MCF 10A (cell line): ENCODE measurements at regions of chr9 and their contacts with region 1.

Region 1: DNA sequence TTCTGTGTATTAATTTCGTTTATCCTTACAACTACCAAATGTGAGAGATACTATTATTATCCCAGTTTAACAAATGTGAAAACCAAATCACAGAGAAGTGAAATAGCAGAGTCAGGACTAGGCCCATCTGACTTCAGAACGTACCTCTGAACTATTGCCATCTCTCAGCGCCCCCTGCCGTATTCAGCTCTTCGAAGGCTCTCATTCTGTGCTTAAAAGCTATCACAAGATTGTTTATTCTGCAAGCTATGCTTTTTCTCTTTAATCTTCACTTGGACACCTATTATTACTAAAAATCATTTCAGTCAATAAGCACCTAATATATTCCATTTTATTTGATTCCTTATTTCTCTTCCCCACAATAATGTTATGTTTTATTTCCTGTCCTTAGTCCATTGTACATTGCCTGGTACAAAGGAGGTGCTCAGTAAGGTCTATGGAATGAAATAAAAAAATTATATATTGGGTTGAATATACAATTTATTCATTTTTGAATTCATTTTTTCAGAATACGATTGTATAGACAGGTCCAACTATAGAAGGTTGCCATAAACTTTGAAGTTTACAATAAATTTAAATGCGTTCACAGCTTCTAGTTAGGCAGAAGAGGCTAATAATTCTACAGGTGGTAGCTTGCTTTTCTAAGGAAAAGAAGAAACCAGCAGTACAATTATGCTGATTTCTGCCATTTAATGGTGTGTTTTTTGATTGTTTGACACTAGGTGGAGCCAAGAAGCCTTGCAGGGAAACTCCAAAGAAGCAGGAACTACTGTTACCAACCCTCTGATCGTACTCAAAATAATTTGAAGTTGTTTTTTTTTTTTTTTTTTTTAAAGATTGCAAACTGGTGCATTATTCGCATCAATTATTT is 202.2 kb upstream of the DMRTA1 start:
- DNase-seq: peak; percentile 55
- H3K4me3 Mint-ChIP-seq: no peak overlapping the region
- H3K27ac Mint-ChIP-seq: no peak overlapping the region
- H3K4me1 Mint-ChIP-seq: peaks cover 23% of the 10 kb centered on the region
- H3K27me3 Mint-ChIP-seq: no peaks in the 10 kb centered on the region
- CTCF ChIP-seq: peak; percentile 30

Region 2: GRCh38 chr9:21326526-21327139 is 917.7 kb before region 1 on chr9:
- CTCF ChIA-PET with region 1: interaction called, 10 read pairs
- POLR2A ChIA-PET with region 1: interaction called, 4 read pairs
- intact Hi-C with region 1: loop called (anchors 5 kb)
- DNase-seq: peak; percentile 30
- H3K4me3 Mint-ChIP-seq: no peak overlapping the region
- H3K27ac Mint-ChIP-seq: no peak overlapping the region
- H3K4me1 Mint-ChIP-seq: peaks cover 6% of the 10 kb centered on the region
- H3K27me3 Mint-ChIP-seq: no peaks in the 10 kb centered on the region
- CTCF ChIP-seq: peak; percentile 32

Region 3: DNA sequence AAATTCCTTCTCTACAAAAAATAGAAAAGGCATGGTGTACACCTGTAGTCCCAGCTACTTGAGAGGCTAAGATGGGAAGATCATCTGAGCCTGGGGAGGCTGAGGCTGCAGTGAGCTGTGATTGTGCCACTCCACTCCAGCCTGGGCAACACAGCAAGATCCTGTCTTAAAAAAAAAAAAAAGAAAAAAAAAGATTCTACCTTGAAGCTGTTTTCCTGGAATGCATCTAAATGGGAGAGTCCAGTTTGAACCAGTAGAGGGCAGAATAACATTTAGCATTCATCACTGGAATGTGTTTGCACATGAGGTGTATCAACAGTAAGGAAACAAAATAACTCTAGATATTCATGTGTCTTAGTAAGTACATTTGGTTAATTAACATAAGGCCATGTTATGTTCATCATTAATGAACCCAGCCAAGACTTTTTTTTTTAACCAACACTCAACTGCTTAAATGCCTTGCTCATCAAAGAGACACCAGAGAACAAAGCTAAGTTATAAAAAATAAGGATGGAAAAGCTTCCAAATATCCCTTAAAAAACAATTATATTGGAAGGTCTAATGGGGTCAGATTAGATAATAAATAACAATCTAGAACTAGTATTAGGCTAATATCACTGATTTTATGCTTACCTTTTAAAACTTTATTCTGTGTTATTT is 778.4 kb before region 1 on chr9:
- CTCF ChIA-PET with region 1: interaction called, 26 read pairs
- POLR2A ChIA-PET with region 1: interaction called, 3 read pairs
- intact Hi-C with region 1: loop called (anchors 10 kb)
- DNase-seq: peak; percentile 47
- H3K4me3 Mint-ChIP-seq: no peak overlapping the region
- H3K27ac Mint-ChIP-seq: no peak overlapping the region
- H3K4me1 Mint-ChIP-seq: no peaks in the 10 kb centered on the region
- H3K27me3 Mint-ChIP-seq: no peaks in the 10 kb centered on the region
- CTCF ChIP-seq: peak; percentile 38

Region 4: GRCh38 chr9:21709464-21710058 is 534.8 kb before region 1 on chr9:
- CTCF ChIA-PET with region 1: interaction called, 21 read pairs
- POLR2A ChIA-PET with region 1: no interaction called
- intact Hi-C with region 1: loop called (anchors 1 kb)
- DNase-seq: peak; percentile 59
- H3K4me3 Mint-ChIP-seq: no peak overlapping the region
- H3K27ac Mint-ChIP-seq: peak overlapping the region; percentile 35
- H3K4me1 Mint-ChIP-seq: peaks cover 6% of the 10 kb centered on the region
- H3K27me3 Mint-ChIP-seq: no peaks in the 10 kb centered on the region
- CTCF ChIP-seq: peak; percentile 29

Region 5: GRCh38 chr9:22189471-22189870 is 54.9 kb before region 1 on chr9:
- CTCF ChIA-PET with region 1: no interaction called
- POLR2A ChIA-PET with region 1: no interaction called
- intact Hi-C with region 1: no loop called
- DNase-seq: no peak
- H3K4me3 Mint-ChIP-seq: no peak overlapping the region
- H3K27ac Mint-ChIP-seq: no peak overlapping the region
- H3K4me1 Mint-ChIP-seq: no peaks in the 10 kb centered on the region
- H3K27me3 Mint-ChIP-seq: no peaks in the 10 kb centered on the region
- CTCF ChIP-seq: no peak

Region 6: DNA sequence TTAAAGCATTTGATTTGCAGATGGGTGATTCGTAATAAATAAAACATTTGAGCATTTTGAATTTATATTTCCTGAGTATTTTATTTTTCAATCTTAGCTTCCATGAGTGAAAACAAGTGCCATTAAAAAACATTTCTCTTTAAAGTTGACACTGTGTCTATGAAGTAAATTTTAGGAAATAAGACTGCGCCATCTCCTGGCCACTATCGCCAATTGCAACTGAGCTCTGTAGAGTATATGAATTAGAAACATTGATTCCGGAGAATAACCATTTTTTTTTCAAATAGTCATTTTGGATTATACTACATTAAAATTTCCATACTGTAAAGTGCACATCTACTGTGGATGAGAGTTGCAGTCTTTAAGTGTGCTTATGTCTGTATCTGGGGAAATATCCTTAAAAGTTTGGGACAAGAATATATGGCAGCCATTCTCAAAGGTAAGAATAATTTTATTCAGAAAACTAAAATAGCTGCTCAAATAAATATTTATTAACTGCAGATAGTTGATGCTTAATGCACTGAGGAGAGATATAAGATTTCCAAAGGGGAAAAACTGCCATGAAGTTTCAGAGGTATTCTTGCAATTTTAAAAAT is 208.1 kb after region 1 on chr9:
- CTCF ChIA-PET with region 1: interaction called, 24 read pairs
- POLR2A ChIA-PET with region 1: interaction called, 3 read pairs
- intact Hi-C with region 1: loop called (anchors 1 kb)
- DNase-seq: peak; percentile 33
- H3K4me3 Mint-ChIP-seq: no peak overlapping the region
- H3K27ac Mint-ChIP-seq: no peak overlapping the region
- H3K4me1 Mint-ChIP-seq: no peaks in the 10 kb centered on the region
- H3K27me3 Mint-ChIP-seq: no peaks in the 10 kb centered on the region
- CTCF ChIP-seq: peak; percentile 39